Heart right ventricle (tissue), 16 donors: ENCODE measurements at regions of chr17 and their contacts with region 1.

Region 1: GRCh38 chr17:17919169-17920107 is 52.8 kb downstream of the TOM1L2 start:
- DNase-seq: peak; percentile 60 to 82
- ATAC-seq: peak; percentile 50 to 78 (median 67)
- H3K4me3 ChIP-seq: no peak overlapping the region
- H3K27ac ChIP-seq: peak overlapping the region in 5 of 10 donors; percentile 6 to 87 (median 78)
- H3K4me1 ChIP-seq: peaks cover 22 to 62% (median 47%) of the 10 kb centered on the region in 9 donors
- H3K27me3 ChIP-seq: no peaks in the 10 kb centered on the region
- CTCF ChIP-seq: peak; percentile 58 to 85 (median 79)

Region 2: GRCh38 chr17:17812211-17813057 is 107.0 kb before region 1 on chr17:
- intact Hi-C with region 1: loop called in 5 of 10 experiments (anchors 5 kb)
- DNase-seq: peak; percentile 77 to 82
- ATAC-seq: peak; percentile 11 to 65 (median 42)
- H3K4me3 ChIP-seq: no peak overlapping the region
- H3K27ac ChIP-seq: peak overlapping the region in 7 of 10 donors; percentile 8 to 56 (median 44)
- H3K4me1 ChIP-seq: peaks cover 14 to 91% (median 52%) of the 10 kb centered on the region in 9 donors
- H3K27me3 ChIP-seq: no peaks in the 10 kb centered on the region
- CTCF ChIP-seq: peak; percentile 99 to 100 (median 100)

Region 3: GRCh38 chr17:17877529-17878358 is 41.7 kb before region 1 on chr17:
- intact Hi-C with region 1: loop called in 1 of 10 experiments (anchors 5 kb)
- DNase-seq: peak; percentile 81 to 88
- ATAC-seq: peak; percentile 79 to 90 (median 85)
- H3K4me3 ChIP-seq: peak overlapping the region in 3 of 10 donors; percentile 3 to 10 (median 5)
- H3K27ac ChIP-seq: peak overlapping the region; percentile 82 to 97 (median 90)
- H3K4me1 ChIP-seq: peaks cover 27 to 79% (median 54%) of the 10 kb centered on the region in 9 donors
- H3K27me3 ChIP-seq: no peaks in the 10 kb centered on the region
- CTCF ChIP-seq: peak in 4 of 9 donors; percentile 6 to 45 (median 28)

Region 4: GRCh38 chr17:17966399-17966798 is 47.0 kb after region 1 on chr17:
- intact Hi-C with region 1: loop called in 4 of 10 experiments (anchors 1 to 5 kb)
- DNase-seq: no peak
- ATAC-seq: no peak
- H3K4me3 ChIP-seq: no peak overlapping the region
- H3K27ac ChIP-seq: no peak overlapping the region
- H3K4me1 ChIP-seq: peaks cover 4 to 85% (median 43%) of the 10 kb centered on the region in 9 donors
- H3K27me3 ChIP-seq: no peaks in the 10 kb centered on the region
- CTCF ChIP-seq: no peak

Region 5: GRCh38 chr17:18021372-18021771 is 101.9 kb after region 1 on chr17:
- intact Hi-C with region 1: no loop called
- DNase-seq: no peak
- ATAC-seq: no peak
- H3K4me3 ChIP-seq: no peak overlapping the region
- H3K27ac ChIP-seq: no peak overlapping the region
- H3K4me1 ChIP-seq: peaks cover 8 to 41% (median 28%) of the 10 kb centered on the region in 9 donors
- H3K27me3 ChIP-seq: no peaks in the 10 kb centered on the region
- CTCF ChIP-seq: no peak

Region 6: GRCh38 chr17:18033442-18034099 is 114.1 kb after region 1 on chr17:
- intact Hi-C with region 1: loop called in 2 of 10 experiments (anchors 5 kb)
- DNase-seq: peak in 1 of 2 donors; percentile 79
- ATAC-seq: peak; percentile 74 to 94 (median 88)
- H3K4me3 ChIP-seq: no peak overlapping the region
- H3K27ac ChIP-seq: peak overlapping the region in 1 of 10 donors; percentile 77
- H3K4me1 ChIP-seq: peaks cover 3 to 54% (median 39%) of the 10 kb centered on the region in 9 donors
- H3K27me3 ChIP-seq: no peaks in the 10 kb centered on the region
- CTCF ChIP-seq: peak; percentile 34 to 81 (median 65)